ENCODE measurements at regions of chr6 and their contacts with region 1.

Region 1: DNA sequence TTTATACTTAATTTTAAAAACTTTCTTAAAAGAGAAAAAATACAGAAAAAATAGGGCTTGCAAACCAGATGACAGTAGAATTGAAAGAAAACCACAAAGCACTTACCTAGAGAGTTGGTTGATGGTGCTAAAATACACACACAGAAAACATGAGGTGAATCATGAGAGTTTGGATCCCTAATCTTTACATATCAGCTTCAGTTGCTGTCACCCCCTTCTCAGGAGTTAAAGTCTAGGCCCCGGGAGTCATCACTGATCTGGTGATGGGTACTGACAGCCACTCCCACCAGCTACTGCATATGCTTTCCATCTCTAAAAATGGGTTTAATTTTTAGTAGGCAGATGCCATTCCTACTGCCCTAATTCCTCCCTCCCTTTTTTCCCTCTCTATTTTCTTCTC is 16.7 kb downstream of the TSBP1 start:
- DNase-seq: no peak
- H3K4me3 Mint-ChIP-seq: no peak overlapping the region
- H3K27ac Mint-ChIP-seq: peak overlapping the region; percentile 12
- H3K4me1 Mint-ChIP-seq: peaks cover 10% of the 10 kb centered on the region
- H3K27me3 Mint-ChIP-seq: peaks cover 21% of the 10 kb centered on the region

Region 2: DNA sequence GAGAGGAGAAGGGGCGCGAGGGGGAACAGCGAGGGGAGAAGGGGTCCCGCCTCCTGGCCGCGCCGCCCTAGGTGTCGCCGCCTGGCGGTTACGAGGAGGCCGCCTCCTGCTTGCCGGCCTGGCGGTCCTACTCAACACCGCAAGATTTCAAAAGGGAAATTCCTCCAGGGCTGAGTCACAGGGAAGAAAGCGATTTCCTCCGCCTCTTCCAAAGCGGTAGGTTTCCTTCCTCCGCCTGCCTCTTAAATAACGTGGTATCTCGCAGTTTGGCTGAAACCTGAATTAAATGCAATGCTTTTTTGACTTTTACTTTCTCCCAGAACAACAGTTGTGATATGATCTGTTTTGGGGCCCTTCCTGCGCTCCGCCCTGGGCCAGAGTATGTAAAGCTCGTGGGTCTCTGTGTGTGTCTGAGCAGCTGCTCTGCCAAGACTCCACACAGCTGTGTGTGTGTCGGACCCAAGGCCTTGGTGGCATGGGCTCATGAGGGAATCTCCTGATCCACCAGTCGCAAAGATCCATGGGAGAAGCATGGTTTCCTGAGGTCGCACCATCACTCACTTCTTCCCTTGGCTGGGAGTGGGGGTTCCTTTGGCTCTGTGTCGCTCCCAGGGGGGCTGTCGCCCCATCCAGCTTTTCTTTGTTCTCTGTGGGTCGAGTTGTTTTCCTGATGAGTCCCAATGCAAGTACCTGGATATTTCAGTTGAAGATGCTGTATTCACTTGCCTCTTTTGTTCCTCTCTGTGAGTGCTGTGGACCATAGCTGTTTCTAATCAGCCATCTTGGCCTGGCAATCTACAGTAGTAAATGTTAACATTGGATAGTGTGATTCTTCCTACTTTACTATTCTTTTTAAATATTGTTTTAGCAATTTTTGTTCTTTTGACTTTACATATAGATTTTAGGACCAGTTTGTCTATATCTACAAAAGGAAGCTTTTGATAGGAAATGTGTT is 99.5 kb before region 1 on chr6:
- intact Hi-C with region 1: loop called (anchors 1 kb)
- DNase-seq: peak; percentile 41
- H3K4me3 Mint-ChIP-seq: peak overlapping the region; percentile 4
- H3K27ac Mint-ChIP-seq: peak overlapping the region; percentile 30
- H3K4me1 Mint-ChIP-seq: peaks cover 19% of the 10 kb centered on the region
- H3K27me3 Mint-ChIP-seq: peaks cover 58% of the 10 kb centered on the region

Region 3: GRCh38 chr6:32369675-32370074 is 14.7 kb after region 1 on chr6:
- intact Hi-C with region 1: loop called (anchors 1 kb)
- DNase-seq: no peak
- H3K4me3 Mint-ChIP-seq: no peak overlapping the region
- H3K27ac Mint-ChIP-seq: no peak overlapping the region
- H3K4me1 Mint-ChIP-seq: peaks cover 21% of the 10 kb centered on the region
- H3K27me3 Mint-ChIP-seq: peaks cover 22% of the 10 kb centered on the region